Left ventricle myocardium inferior (tissue), 1 donor: ENCODE measurements at regions of chr11 and their contacts with region 1.

Region 1: GRCh38 chr11:74929431-74930363 is 19.2 kb downstream of the XRRA1 start:
- DNase-seq: peak; percentile 19
- H3K4me3 ChIP-seq: no peak overlapping the region
- H3K27ac ChIP-seq: no peak overlapping the region
- H3K4me1 ChIP-seq: no peaks in the 10 kb centered on the region
- H3K27me3 ChIP-seq: no peaks in the 10 kb centered on the region
- CTCF ChIP-seq: peak; percentile 89

Region 2: DNA sequence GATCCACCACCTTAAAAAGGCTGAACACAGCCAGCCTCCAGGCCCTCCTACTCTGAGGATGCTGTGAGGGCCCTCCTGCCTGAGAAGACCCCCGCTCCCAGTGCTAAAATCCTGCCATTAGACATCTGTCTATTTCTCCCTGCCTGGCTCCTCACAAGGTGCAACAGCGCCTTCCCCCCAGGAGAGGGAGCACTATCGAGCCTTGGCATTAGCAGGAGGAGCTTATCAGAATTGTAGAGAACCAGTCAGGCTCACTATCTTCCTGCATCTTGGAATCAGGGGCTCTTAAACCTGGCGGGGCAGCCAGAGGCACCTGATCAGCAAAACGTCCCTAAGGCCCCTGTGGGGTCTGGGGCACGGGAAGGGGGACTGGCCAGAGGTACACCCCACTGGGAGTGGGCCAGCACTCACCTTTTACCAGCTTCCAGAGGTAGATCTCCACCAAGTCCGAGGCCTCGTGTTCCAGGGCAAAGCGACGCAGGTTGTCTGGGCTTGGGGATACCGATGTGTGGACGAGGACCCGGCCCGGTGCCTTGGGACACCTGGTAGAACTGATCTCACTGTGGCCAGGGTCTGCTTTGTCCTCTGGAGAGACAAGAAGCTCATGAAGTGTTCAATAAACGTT is 227.2 kb before region 1 on chr11:
- intact Hi-C with region 1: no loop called
- DNase-seq: peak; percentile 55
- H3K4me3 ChIP-seq: no peak overlapping the region
- H3K27ac ChIP-seq: no peak overlapping the region
- H3K4me1 ChIP-seq: peaks cover 11% of the 10 kb centered on the region
- H3K27me3 ChIP-seq: no peaks in the 10 kb centered on the region
- CTCF ChIP-seq: peak; percentile 94

Region 3: DNA sequence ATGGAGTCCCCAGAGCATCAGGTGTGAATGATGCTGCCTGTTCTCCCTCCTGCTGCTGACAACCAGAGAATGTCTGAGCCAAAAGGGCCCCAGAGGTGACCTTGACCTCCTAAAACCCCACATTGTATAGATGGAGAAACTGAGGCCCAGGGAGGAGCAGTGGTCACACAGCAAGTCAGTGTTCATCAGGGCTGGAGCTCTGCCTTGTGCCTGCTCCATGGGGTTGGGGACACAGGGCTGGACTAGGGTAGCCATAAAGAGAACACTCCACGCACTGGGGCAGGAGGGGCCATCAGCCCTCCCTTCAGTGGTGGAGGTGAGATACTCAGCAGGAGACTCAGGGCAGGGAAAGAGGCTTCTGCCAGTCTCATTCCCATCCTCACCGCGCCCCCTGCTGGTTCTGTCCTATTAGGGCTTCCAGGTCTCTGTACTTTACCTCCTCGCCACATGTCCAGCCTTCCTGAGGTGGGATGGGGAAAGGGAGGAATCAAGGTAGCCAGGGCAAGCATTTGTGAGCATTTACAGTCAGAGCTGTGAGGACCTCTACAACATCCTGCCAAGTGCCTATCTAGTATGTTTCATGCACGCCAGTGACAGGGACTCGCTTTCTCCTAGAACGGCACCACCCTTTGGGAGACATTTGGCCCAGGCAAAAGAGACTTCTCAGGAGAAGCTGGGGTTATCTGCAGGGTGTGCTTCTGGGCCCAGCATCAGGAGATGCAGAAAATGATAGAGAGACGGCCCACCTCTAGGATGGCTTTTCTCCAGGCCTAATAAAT is 102.3 kb after region 1 on chr11:
- intact Hi-C with region 1: loop called (anchors 5 kb)
- DNase-seq: peak; percentile 70
- H3K4me3 ChIP-seq: no peak overlapping the region
- H3K27ac ChIP-seq: no peak overlapping the region
- H3K4me1 ChIP-seq: no peaks in the 10 kb centered on the region
- H3K27me3 ChIP-seq: no peaks in the 10 kb centered on the region
- CTCF ChIP-seq: peak; percentile 80